Dorsolateral prefrontal cortex (tissue), 120 donors: ENCODE measurements at regions of chr6 and their contacts with region 1.

Region 1: GRCh38 chr6:41584668-41585205 is 38.6 kb downstream of the FOXP4 start:
- DNase-seq: no peak
- H3K4me3 ChIP-seq: no peak overlapping the region
- H3K27ac ChIP-seq: peak overlapping the region in 1 of 59 donors; percentile 36
- H3K27me3 ChIP-seq: no peaks in the 10 kb centered on the region
- CTCF ChIP-seq: no peak

Region 2: DNA sequence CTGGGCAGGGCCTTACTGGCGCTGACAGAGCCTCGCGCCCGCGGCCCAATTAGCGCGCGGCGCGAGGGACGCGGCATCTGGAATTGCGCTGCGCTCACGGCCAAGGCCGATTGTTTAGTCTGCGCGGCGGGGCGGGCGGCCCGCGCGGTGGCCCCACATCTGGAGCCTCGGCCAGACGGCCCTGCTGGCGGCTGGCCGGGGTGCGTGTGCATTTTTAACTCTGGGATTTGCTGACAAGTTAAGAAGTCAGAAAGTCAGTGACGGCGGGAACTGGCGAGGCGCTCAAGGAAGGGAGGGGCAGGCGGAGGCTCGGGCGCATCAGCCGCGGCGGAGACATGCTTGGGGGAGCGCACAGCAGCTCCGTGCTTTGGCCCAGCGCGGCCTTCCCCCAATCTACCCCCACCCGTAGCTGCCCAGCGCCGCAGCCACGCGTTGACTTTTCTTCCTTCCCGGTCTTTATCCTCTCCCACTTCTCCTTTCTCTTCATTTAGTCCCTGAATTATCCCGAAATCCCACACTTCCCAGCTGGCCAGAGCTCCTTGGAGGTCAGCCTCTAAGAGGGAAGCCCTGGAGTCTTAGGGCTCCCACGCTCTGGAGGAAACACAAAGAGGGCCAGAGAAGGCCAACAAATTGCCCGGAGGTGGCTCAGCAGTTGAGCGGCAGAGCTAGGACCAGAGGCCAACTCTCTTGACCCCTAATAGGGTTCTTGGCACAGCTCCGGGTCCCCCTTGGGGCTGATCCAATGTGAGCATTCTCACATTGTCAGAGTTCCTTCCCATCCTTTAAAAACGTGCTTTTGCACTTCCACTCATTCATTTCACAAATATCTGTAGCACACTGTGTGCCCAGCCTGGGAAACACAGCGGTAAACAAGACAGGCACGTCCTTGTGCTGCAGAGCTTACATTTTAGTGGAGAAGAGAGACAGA is 79.4 kb before region 1 on chr6:
- intact Hi-C with region 1: loop called in 1 of 2 experiments (anchors 5 kb)
- DNase-seq: peak in 4 of 10 donors; percentile 8 to 54 (median 20)
- H3K4me3 ChIP-seq: peak overlapping the region in 58 of 59 donors; percentile 0 to 68 (median 48)
- H3K27ac ChIP-seq: peak overlapping the region in 10 of 59 donors; percentile 0 to 77 (median 34)
- H3K27me3 ChIP-seq: peaks cover 0 to 41% (median 8%) of the 10 kb centered on the region in 45 donors
- CTCF ChIP-seq: peak in 1 of 56 donors; percentile 19